ENCODE measurements at regions of chr11 and their contacts with region 1.

Region 1: DNA sequence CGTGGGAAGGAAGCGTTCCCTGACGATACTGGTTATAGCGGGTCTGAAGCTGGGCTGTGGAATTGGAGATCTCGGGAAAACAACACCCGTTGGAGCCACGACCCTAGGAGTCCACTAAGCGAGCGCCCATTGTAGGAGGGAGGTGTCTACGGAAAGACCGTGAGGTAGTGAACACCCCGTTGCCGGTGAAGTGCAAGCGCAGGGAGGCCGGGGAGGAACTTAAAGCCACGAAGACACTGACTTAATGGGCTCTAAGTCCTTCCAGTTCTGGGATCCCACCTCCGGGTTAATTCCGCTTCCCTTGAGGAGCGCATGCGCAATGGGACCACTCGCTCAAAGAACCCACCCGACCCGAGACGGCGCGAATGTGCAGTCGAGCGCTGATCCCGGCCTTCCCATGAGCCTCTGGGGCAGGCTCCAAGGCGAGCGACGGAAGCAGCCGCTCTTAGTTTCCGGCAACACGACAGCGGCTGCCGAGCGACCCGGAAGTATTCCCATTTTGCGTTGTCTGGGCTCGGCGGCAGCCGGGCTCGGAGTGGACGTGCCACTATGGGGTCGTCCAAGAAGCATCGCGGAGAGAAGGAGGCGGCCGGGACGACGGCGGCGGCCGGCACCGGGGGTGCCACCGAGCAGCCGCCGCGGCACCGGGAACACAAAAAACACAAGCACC is at the start of gene SART1:
- DNase-seq: peak; percentile 97
- ATAC-seq: peak; percentile 90
- H3K4me3 ChIP-seq: peak within 1 kb of the TSS; percentile 74 to 90 (median 87)
- H3K4me3 Mint-ChIP-seq: peak within 1 kb of the TSS; percentile 98
- H3K27ac ChIP-seq: peak within 1 kb of the TSS; percentile 77 to 89
- H3K27ac Mint-ChIP-seq: peak within 1 kb of the TSS; percentile 98
- H3K4me1 ChIP-seq: peaks cover 35 to 47% of the 10 kb centered on the region in 2 donors
- H3K4me1 Mint-ChIP-seq: peaks cover 52% of the 10 kb centered on the region
- H3K27me3 ChIP-seq: no peaks in the 10 kb centered on the region
- H3K27me3 Mint-ChIP-seq: no peaks in the 10 kb centered on the region
- CTCF ChIP-seq: no peak
- total RNA-seq, gene SART1: 97.4 and 102 TPM in 2 replicates

Region 2: DNA sequence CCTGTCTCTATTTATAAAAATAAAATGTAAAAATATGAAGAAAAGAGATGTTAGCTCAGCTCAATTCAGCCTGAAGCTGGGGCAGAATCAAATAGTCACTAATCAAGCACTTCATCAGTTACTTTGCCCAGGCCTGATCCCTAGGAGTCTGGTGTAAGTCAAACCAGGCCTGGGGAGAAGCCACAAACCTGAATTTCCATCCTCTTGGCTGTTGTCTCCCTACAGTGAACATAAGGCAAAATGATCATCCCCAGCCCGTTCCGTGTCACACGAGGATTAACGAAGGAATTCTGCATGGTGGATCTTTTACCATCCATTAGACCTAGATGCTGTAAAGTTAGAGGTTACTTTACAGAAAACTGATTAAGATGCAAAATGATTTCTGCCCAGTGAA is 896.5 kb before region 1 on chr11:
- CTCF ChIA-PET with region 1: no interaction called
- POLR2A ChIA-PET with region 1: interaction called, 14 read pairs
- intact Hi-C with region 1: no loop called
- DNase-seq: no peak
- ATAC-seq: no peak
- H3K4me3 ChIP-seq: no peak overlapping the region
- H3K4me3 Mint-ChIP-seq: no peak overlapping the region
- H3K27ac ChIP-seq: no peak overlapping the region
- H3K27ac Mint-ChIP-seq: no peak overlapping the region
- H3K4me1 ChIP-seq: no peaks in the 10 kb centered on the region
- H3K4me1 Mint-ChIP-seq: no peaks in the 10 kb centered on the region
- H3K27me3 ChIP-seq: no peaks in the 10 kb centered on the region
- H3K27me3 Mint-ChIP-seq: no peaks in the 10 kb centered on the region
- CTCF ChIP-seq: no peak

Region 3: GRCh38 chr11:65720237-65720934 is 241.0 kb before region 1 on chr11 and contains the start of gene RNASEH2C:
- CTCF ChIA-PET with region 1: no interaction called
- POLR2A ChIA-PET with region 1: no interaction called
- intact Hi-C with region 1: loop called (anchors 1 kb)
- DNase-seq: peak; percentile 89
- ATAC-seq: peak; percentile 92
- H3K4me3 ChIP-seq: peak within 1 kb of the TSS; percentile 59 to 84 (median 74)
- H3K4me3 Mint-ChIP-seq: peak within 1 kb of the TSS; percentile 97
- H3K27ac ChIP-seq: peak within 1 kb of the TSS; percentile 59 to 73
- H3K27ac Mint-ChIP-seq: peak within 1 kb of the TSS; percentile 91
- H3K4me1 ChIP-seq: peaks cover 14 to 16% of the 10 kb centered on the region in 2 donors
- H3K4me1 Mint-ChIP-seq: peaks cover 35% of the 10 kb centered on the region
- H3K27me3 ChIP-seq: no peaks in the 10 kb centered on the region
- H3K27me3 Mint-ChIP-seq: no peaks in the 10 kb centered on the region
- CTCF ChIP-seq: no peak
- total RNA-seq, gene RNASEH2C: 75.3 and 81.6 TPM in 2 replicates

Region 4: DNA sequence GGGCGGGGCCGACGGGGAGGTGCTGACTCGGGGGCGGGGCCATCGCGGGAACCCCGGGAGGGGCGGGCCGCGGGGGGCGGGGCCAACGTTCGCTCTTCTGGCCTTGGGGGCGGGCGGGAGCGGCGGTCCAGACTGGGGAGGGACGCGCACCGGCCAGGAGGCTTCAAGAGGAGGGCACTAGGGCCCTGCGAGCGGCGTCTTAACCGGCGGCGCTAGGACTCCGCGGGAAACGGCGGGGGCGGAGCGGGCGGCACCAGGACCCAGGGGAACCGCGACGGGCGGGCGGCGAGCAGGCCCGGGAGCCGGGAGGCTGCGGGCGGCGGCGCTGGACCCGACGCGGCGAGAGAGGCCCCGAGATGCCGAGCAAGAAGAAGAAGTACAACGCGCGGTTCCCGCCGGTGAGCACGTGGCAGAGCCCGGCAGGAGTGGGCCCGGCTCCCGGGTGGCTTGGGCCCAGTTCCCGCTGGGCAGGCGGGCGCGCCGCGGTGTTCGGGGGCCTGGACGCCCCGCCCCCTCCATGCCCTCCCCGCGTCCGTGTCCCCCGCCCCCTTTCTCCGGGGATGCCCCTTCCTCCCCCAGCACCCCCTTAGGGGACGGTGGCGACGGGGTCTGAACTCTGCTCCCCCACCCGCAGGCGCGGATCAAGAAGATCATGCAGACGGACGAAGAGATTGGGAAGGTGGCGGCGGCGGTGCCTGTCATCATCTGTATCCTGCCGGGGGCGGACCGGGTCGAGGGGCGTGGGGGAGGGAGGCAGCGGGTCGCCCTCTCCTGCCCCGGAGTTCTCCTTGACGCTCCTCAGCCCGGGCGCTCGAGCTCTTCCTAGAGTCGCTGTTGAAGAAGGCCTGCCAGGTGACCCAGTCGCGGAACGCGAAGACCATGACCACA is 42.0 kb before region 1 on chr11 and contains the start of gene DRAP1:
- CTCF ChIA-PET with region 1: no interaction called
- POLR2A ChIA-PET with region 1: no interaction called
- intact Hi-C with region 1: loop called (anchors 1 kb)
- DNase-seq: peak; percentile 98
- ATAC-seq: peak; percentile 87
- H3K4me3 ChIP-seq: peak within 1 kb of the TSS; percentile 83 to 99 (median 93)
- H3K4me3 Mint-ChIP-seq: peak within 1 kb of the TSS; percentile 95
- H3K27ac ChIP-seq: peak within 1 kb of the TSS; percentile 66 to 85
- H3K27ac Mint-ChIP-seq: peak within 1 kb of the TSS; percentile 89
- H3K4me1 ChIP-seq: peaks cover 19 to 50% of the 10 kb centered on the region in 2 donors
- H3K4me1 Mint-ChIP-seq: peaks cover 44% of the 10 kb centered on the region
- H3K27me3 ChIP-seq: no peaks in the 10 kb centered on the region
- H3K27me3 Mint-ChIP-seq: no peaks in the 10 kb centered on the region
- CTCF ChIP-seq: no peak
- total RNA-seq, gene DRAP1: 62.9 and 71.7 TPM in 2 replicates

Region 5: GRCh38 chr11:65927904-65928397 is 33.4 kb before region 1 on chr11:
- CTCF ChIA-PET with region 1: interaction called, 4 read pairs
- POLR2A ChIA-PET with region 1: interaction called, 5 read pairs
- intact Hi-C with region 1: loop called (anchors 1 kb)
- DNase-seq: peak; percentile 89
- ATAC-seq: peak; percentile 94
- H3K4me3 ChIP-seq: peak overlapping the region in 4 of 5 experiments; percentile 27 to 67 (median 38)
- H3K4me3 Mint-ChIP-seq: peak overlapping the region; percentile 74
- H3K27ac ChIP-seq: peak overlapping the region; percentile 70 to 79
- H3K27ac Mint-ChIP-seq: peak overlapping the region; percentile 98
- H3K4me1 ChIP-seq: peaks cover 20 to 22% of the 10 kb centered on the region in 2 donors
- H3K4me1 Mint-ChIP-seq: peaks cover 18% of the 10 kb centered on the region
- H3K27me3 ChIP-seq: no peaks in the 10 kb centered on the region
- H3K27me3 Mint-ChIP-seq: no peaks in the 10 kb centered on the region
- CTCF ChIP-seq: no peak

Region 6: DNA sequence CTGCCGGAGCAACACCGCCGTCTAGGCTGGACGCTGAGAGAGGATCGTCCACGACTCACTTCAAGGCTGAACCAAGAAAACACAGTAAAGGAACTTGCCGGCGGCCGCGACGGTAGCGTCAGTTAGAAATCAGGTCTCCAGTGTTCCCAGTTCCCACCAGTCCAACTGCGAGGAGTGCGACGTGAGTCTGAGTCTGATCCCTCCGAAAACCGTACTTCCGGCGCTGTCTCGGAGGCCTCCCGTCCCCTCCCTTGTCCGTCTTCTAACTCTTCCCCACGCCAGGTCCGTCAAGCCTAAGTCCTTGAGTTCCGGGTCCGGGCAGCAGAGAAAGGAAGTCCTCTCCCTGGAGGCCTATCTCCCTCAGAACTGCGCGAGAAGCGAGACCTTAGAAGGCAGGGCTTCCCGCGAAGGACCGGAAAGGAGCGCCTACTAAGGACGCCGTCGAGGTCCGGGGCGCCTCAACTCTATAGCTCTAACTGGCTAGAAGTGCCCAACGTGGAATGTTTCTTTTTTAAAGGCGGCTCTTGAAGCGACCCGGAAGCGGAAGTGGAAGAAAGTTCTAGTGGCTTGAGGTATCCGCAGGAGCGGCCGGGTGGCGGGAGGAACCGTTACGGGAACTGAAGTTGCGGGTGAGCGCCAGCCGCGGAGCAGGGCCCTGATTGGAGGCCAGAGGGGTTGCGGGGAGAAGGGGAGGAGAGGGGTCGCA is 40.7 kb after region 1 on chr11 and contains the starts of genes BANF1 and EIF1AD:
- CTCF ChIA-PET with region 1: interaction called, 4 read pairs
- POLR2A ChIA-PET with region 1: interaction called, 9 read pairs
- intact Hi-C with region 1: loop called (anchors 1 kb)
- DNase-seq: peak; percentile 98
- ATAC-seq: peak; percentile 80
- H3K4me3 ChIP-seq: peak within 1 kb of the TSS; percentile 75 to 100 (median 96)
- H3K4me3 Mint-ChIP-seq: peak within 1 kb of the TSS; percentile 98
- H3K27ac ChIP-seq: peak within 1 kb of the TSS; percentile 89 to 94
- H3K27ac Mint-ChIP-seq: peak within 1 kb of the TSS; percentile 99
- H3K4me1 ChIP-seq: peaks cover 16 to 25% of the 10 kb centered on the region in 2 donors
- H3K4me1 Mint-ChIP-seq: peaks cover 34% of the 10 kb centered on the region
- H3K27me3 ChIP-seq: no peaks in the 10 kb centered on the region
- H3K27me3 Mint-ChIP-seq: no peaks in the 10 kb centered on the region
- CTCF ChIP-seq: no peak
- total RNA-seq, gene BANF1: 99.3 and 99.5 TPM in 2 replicates
- total RNA-seq, gene EIF1AD: 61.0 and 65.2 TPM in 2 replicates

Region 7: GRCh38 chr11:66081505-66081904 is 120.1 kb after region 1 on chr11:
- CTCF ChIA-PET with region 1: no interaction called
- POLR2A ChIA-PET with region 1: no interaction called
- intact Hi-C with region 1: no loop called
- DNase-seq: peak; percentile 89
- ATAC-seq: peak; percentile 92
- H3K4me3 ChIP-seq: peak overlapping the region in 4 of 5 experiments; percentile 27 to 60 (median 42)
- H3K4me3 Mint-ChIP-seq: peak overlapping the region; percentile 80
- H3K27ac ChIP-seq: peak overlapping the region; percentile 76 to 93
- H3K27ac Mint-ChIP-seq: peak overlapping the region; percentile 95
- H3K4me1 ChIP-seq: peaks cover 84 to 91% of the 10 kb centered on the region in 2 donors
- H3K4me1 Mint-ChIP-seq: peaks cover 92% of the 10 kb centered on the region
- H3K27me3 ChIP-seq: no peaks in the 10 kb centered on the region
- H3K27me3 Mint-ChIP-seq: no peaks in the 10 kb centered on the region
- CTCF ChIP-seq: no peak

Measured in B cell (primary cell).